ENCODE measurements at regions of chr16 and their contacts with region 1.

Region 1: DNA sequence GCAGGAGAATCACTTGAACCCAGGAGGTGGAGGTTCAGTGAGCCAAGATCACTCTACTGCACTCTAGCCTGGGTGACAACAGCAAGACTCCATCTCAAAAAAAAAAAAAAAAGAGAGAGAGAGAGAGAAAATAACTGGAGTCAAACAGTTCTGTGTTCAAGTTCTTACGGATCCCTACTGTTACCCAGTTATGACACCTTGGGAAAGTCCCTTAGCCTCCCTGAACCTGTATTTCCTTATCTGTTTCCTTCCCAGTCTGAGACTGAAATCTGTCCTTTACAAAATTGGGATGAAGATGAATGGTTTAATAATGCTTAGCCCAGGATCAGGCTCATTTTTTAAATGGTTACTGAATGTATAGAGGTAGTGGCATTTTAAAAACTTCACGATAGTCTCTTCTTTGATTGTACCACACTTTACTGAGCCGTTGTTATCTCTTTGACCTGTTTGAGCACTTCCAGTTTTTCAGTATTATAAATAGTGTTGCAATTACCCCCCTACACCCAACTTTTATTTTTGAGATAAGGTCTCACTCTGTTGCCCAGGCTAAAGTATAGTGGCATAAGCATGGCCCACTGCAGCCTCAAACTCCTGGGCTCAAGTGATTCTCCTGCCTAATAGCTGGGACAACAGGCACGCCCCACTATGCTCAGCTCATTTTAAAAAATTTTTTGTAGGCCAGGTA is 17.1 kb downstream of the ZNF768 start:
- DNase-seq: no peak
- ATAC-seq: no peak
- H3K4me3 ChIP-seq: no peak overlapping the region
- H3K27ac ChIP-seq: no peak overlapping the region
- H3K4me1 ChIP-seq: no peaks in the 10 kb centered on the region
- H3K27me3 ChIP-seq: no peaks in the 10 kb centered on the region
- CTCF ChIP-seq: no peak

Region 2: GRCh38 chr16:30383521-30383920 is 125.7 kb before region 1 on chr16:
- CTCF ChIA-PET with region 1: no interaction called
- POLR2A ChIA-PET with region 1: no interaction called
- in situ Hi-C with region 1: no loop called
- intact Hi-C with region 1: no loop called
- DNase-seq: no peak
- ATAC-seq: no peak
- H3K4me3 ChIP-seq: no peak overlapping the region
- H3K27ac ChIP-seq: no peak overlapping the region
- H3K4me1 ChIP-seq: 0 out of 2 replicates have a peak, but pooled peaks cover 3% of the 10 kb centered on the region
- H3K27me3 ChIP-seq: no peaks in the 10 kb centered on the region
- CTCF ChIP-seq: no peak

Region 3: DNA sequence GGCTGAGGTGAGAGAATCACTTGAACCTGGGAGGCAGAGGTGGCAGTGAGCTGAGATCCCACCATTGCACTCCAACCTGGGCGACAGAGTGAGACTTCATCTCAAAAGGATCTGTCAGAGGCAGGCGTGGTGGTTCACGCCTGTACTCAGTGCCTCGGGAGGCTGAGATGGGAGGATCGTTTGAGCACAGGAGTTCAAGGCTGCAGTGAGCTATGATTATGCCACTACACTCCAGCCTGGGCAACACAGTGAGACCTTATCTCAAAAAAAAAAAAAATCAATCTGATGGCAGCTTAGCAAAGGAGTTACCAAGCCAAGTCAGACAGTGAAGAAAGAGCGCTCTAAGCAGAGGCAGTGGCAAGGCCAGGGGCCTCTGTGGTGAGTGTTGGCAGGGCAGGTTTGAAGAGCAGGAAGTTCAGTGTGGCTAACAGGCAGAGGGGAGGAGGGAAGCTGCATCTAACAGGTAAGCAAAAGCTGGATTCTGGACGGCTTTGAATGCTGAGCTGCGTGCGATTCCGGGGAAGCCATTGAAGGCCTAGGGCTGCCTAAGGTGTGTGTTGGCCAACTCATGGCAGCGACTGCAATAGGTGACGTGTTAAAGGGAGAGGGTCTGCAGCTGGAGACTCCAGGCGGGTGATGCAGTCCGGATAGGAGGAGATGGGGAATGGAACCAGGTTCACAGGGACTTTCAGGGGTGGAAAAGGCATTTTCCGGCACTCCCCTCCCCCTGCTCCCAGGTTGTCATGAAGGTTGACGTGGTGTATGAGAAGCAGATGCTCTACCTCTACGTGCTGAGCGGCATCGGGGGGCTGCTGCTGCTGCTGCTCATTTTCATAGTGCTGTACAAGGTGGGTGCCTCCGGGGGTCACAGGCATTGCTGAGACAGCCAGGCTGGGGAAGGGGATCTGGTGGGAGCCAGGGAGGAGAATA is 10.2 kb after region 1 on chr16:
- CTCF ChIA-PET with region 1: no interaction called
- POLR2A ChIA-PET with region 1: interaction called, 11 read pairs
- in situ Hi-C with region 1: no loop called
- intact Hi-C with region 1: no loop called
- DNase-seq: no peak
- ATAC-seq: no peak
- H3K4me3 ChIP-seq: no peak overlapping the region
- H3K27ac ChIP-seq: no peak overlapping the region
- H3K4me1 ChIP-seq: peaks cover 1% of the 10 kb centered on the region; the same call in 1 of the 2 replicates
- H3K27me3 ChIP-seq: no peaks in the 10 kb centered on the region
- CTCF ChIP-seq: no peak